ENCODE measurements at regions of chr15 and their contacts with region 1.

Region 1: DNA sequence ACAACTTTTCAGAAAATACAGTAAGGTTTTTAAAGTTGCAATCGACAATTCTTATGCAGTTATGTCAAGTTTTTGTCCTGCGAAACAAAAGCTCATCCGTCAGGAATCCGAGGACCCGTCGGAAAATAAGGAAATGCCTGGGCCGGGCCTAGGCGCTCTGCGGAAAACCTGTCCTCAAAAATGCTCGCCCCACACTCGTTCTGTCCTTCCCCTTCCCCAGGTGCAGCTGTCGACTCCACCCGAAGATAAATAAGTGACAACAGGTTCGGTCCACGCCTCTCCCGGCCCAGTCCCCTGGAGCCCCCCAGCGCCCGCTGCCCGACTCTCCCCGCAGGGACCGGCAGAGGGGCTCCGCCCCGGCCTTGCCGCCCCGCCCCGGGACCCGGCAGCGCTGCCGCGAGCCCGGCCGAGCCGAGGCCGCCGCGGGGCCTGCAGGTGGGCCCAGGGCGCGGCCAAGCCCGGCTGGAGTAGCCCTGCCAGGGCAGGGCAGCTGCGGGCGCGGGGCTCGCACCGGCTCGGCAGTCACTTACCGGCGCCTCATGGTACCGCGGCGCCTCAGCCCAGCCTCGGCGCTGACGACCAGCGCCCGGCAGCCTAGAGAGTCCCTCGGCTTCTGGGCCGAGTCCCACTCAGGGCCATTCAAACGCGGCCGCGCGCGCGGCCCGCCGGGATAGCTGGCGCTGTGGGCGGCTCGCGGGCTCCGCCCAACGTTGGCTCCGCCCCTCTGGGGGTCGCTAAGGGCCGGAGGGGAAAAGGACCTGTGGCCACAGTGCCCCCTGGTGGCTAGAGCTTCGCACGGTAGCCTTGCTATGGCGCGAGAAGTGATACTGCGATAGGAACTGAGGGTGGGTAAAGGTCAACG is at the start of gene KATNBL1:
- DNase-seq: peak; percentile 95 to 100 (median 98)
- ATAC-seq: peak; percentile 99
- H3K4me3 ChIP-seq: peak within 1 kb of the TSS; percentile 50 to 61
- H3K27ac ChIP-seq: peak within 1 kb of the TSS; percentile 87
- H3K4me1 ChIP-seq: peaks cover 11 to 22% of the 10 kb centered on the region in 2 donors
- H3K27me3 ChIP-seq: no peaks in the 10 kb centered on the region
- CTCF ChIP-seq: peak; percentile 96 to 97
- polyA plus RNA-seq, gene KATNBL1: 75.2 to 112 (median 95.6) TPM

Region 2: GRCh38 chr15:34065941-34066340 is 143.7 kb before region 1 on chr15:
- intact Hi-C with region 1: loop called in 1 of 2 experiments (anchors 10 kb)
- DNase-seq: no peak
- ATAC-seq: no peak
- H3K4me3 ChIP-seq: no peak overlapping the region
- H3K27ac ChIP-seq: no peak overlapping the region
- H3K4me1 ChIP-seq: peaks cover 0 to 6% of the 10 kb centered on the region in 2 donors
- H3K27me3 ChIP-seq: no peaks in the 10 kb centered on the region
- CTCF ChIP-seq: no peak

Region 3: GRCh38 chr15:34109797-34110663 is 99.6 kb before region 1 on chr15:
- intact Hi-C with region 1: loop called in 1 of 2 experiments (anchors 5 kb)
- DNase-seq: peak in 2 of 4 donors; percentile 8 to 46
- ATAC-seq: no peak
- H3K4me3 ChIP-seq: no peak overlapping the region
- H3K27ac ChIP-seq: no peak overlapping the region
- H3K4me1 ChIP-seq: no peaks in the 10 kb centered on the region
- H3K27me3 ChIP-seq: peaks cover 0 to 23% of the 10 kb centered on the region in 2 donors
- CTCF ChIP-seq: peak; percentile 31 to 43